HCT116 (cell line): ENCODE measurements at regions of chr16 and their contacts with region 1.

Region 1: GRCh38 chr16:71412270-71413160 is 29.3 kb downstream of the TLE7 start:
- DNase-seq: peak; percentile 64
- ATAC-seq: peak; percentile 91
- H3K4me3 ChIP-seq: peak overlapping the region; percentile 32 to 49
- H3K27ac ChIP-seq: no peak overlapping the region
- H3K4me1 ChIP-seq: peaks cover 0 to 10% of the 10 kb centered on the region in 2 experiments; a peak in 3 of 4 replicates
- H3K27me3 ChIP-seq: peaks cover 18% of the 10 kb centered on the region
- CTCF ChIP-seq: peak; percentile 66 to 95 (median 78)
- POLR2A ChIP-seq: no peak
- RAD21 ChIP-seq: peak; percentile 87

Region 2: GRCh38 chr16:71537643-71538042 is 125.1 kb after region 1 on chr16:
- CTCF ChIA-PET with region 1: interaction called, 7 read pairs
- POLR2A ChIA-PET with region 1: no interaction called
- RAD21 ChIA-PET with region 1: no interaction called
- intact Hi-C with region 1: loop called (anchors 5 kb)
- DNase-seq: peak; percentile 50
- ATAC-seq: peak; percentile 81
- H3K4me3 ChIP-seq: no peak overlapping the region
- H3K27ac ChIP-seq: no peak overlapping the region
- H3K4me1 ChIP-seq: peaks cover 0 to 6% of the 10 kb centered on the region in 2 experiments; a peak in 1 of 4 replicates
- H3K27me3 ChIP-seq: no peaks in the 10 kb centered on the region
- CTCF ChIP-seq: peak; percentile 68 to 75 (median 70)
- POLR2A ChIP-seq: no peak
- RAD21 ChIP-seq: peak; percentile 87

Region 3: DNA sequence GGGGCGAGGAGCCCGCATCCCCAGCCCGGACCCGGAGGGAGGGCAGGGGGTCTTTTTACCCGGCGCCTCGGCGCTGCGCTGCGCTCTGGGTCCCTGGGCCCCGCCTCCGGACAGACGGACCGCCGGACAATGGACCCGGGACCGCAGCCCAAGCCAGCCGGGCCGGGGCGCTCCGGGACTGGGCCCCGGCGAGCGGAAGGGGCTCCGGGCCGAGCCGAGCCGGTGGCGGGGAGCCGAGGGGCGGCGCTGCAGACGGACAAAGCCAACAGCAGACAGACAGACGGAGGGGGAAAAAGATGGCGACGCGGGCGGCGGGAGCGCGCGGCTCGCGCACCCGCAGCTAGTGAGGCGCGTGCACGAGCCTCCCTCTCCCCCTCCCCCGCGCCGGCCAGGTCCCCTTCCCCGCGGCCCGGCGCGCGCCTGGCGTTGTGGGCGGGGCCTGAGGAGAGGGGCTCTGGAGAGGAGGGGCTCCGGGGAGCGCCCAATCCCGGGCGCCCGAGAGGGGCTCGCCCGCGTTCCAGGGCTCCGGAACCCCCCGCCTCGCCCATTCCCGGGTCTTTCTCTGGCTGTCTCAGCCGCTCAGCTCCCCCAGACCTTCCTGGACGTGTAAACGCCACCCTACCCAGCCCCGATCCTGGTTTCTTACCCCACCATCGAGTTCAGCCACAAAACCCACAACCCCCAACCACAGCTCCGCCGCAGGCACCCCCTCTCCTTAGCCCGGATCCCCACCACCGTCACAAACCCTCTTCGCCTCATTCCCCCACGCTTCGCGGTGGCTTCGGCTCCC is 471.5 kb after region 1 on chr16 and contains the start of gene ZNF821:
- CTCF ChIA-PET with region 1: no interaction called
- POLR2A ChIA-PET with region 1: no interaction called
- RAD21 ChIA-PET with region 1: no interaction called
- intact Hi-C with region 1: no loop called
- DNase-seq: no peak
- ATAC-seq: peak; percentile 70
- H3K4me3 ChIP-seq: peak within 1 kb of the TSS; percentile 61 to 73
- H3K27ac ChIP-seq: peak within 1 kb of the TSS; percentile 79
- H3K4me1 ChIP-seq: peaks cover 14 to 18% of the 10 kb centered on the region in 2 experiments
- H3K27me3 ChIP-seq: no peaks in the 10 kb centered on the region
- CTCF ChIP-seq: peak in 1 of 3 experiments; percentile 21; a peak in 2 of 6 replicates
- POLR2A ChIP-seq: no peak
- RAD21 ChIP-seq: no peak
- total RNA-seq, gene ZNF821: 4.9 TPM